CD8-positive, alpha-beta T cell (primary cell): ENCODE measurements at regions of chr15 and their contacts with region 1.

Region 1: GRCh38 chr15:81265944-81266775 is 57.8 kb downstream of the STARD5 start:
- DNase-seq: peak; percentile 64 to 88 (median 84)
- ATAC-seq: peak; percentile 84
- H3K4me3 ChIP-seq: peak overlapping the region; percentile 9 to 13
- H3K4me3 Mint-ChIP-seq: peak overlapping the region; percentile 78
- H3K27ac ChIP-seq: no peak overlapping the region
- H3K27ac Mint-ChIP-seq: peak overlapping the region; percentile 7
- H3K4me1 ChIP-seq: peaks cover 29% of the 10 kb centered on the region
- H3K4me1 Mint-ChIP-seq: peaks cover 47% of the 10 kb centered on the region
- H3K27me3 ChIP-seq: no peaks in the 10 kb centered on the region
- H3K27me3 Mint-ChIP-seq: no peaks in the 10 kb centered on the region
- CTCF ChIP-seq: peak; percentile 77

Region 2: GRCh38 chr15:80977627-80978036 is 288.5 kb before region 1 on chr15:
- CTCF ChIA-PET with region 1: interaction called, 26 read pairs
- POLR2A ChIA-PET with region 1: no interaction called
- intact Hi-C with region 1: loop called in 1 of 2 experiments (anchors 2 kb)
- DNase-seq: peak in 6 of 9 experiments; percentile 28 to 59 (median 40)
- ATAC-seq: peak; percentile 46
- H3K4me3 ChIP-seq: no peak overlapping the region
- H3K4me3 Mint-ChIP-seq: no peak overlapping the region
- H3K27ac ChIP-seq: no peak overlapping the region
- H3K27ac Mint-ChIP-seq: peak overlapping the region; percentile 14
- H3K4me1 ChIP-seq: no peaks in the 10 kb centered on the region
- H3K4me1 Mint-ChIP-seq: peaks cover 43% of the 10 kb centered on the region
- H3K27me3 ChIP-seq: no peaks in the 10 kb centered on the region
- H3K27me3 Mint-ChIP-seq: no peaks in the 10 kb centered on the region
- CTCF ChIP-seq: peak; percentile 17

Region 3: GRCh38 chr15:81106560-81106959 is 159.6 kb before region 1 on chr15:
- CTCF ChIA-PET with region 1: interaction called, 82 read pairs
- POLR2A ChIA-PET with region 1: no interaction called
- intact Hi-C with region 1: loop called (anchors 1 kb)
- DNase-seq: peak in 5 of 9 experiments; percentile 32 to 67 (median 45)
- ATAC-seq: no peak
- H3K4me3 ChIP-seq: no peak overlapping the region
- H3K4me3 Mint-ChIP-seq: no peak overlapping the region
- H3K27ac ChIP-seq: no peak overlapping the region
- H3K27ac Mint-ChIP-seq: no peak overlapping the region
- H3K4me1 ChIP-seq: no peaks in the 10 kb centered on the region
- H3K4me1 Mint-ChIP-seq: no peaks in the 10 kb centered on the region
- H3K27me3 ChIP-seq: no peaks in the 10 kb centered on the region
- H3K27me3 Mint-ChIP-seq: peaks cover 23% of the 10 kb centered on the region
- CTCF ChIP-seq: peak; percentile 69

Region 4: GRCh38 chr15:81163961-81164800 is 102.0 kb before region 1 on chr15:
- CTCF ChIA-PET with region 1: interaction called, 10 read pairs
- POLR2A ChIA-PET with region 1: no interaction called
- intact Hi-C with region 1: no loop called
- DNase-seq: no peak
- ATAC-seq: no peak
- H3K4me3 ChIP-seq: no peak overlapping the region
- H3K4me3 Mint-ChIP-seq: no peak overlapping the region
- H3K27ac ChIP-seq: no peak overlapping the region
- H3K27ac Mint-ChIP-seq: no peak overlapping the region
- H3K4me1 ChIP-seq: peaks cover 8% of the 10 kb centered on the region
- H3K4me1 Mint-ChIP-seq: peaks cover 15% of the 10 kb centered on the region
- H3K27me3 ChIP-seq: no peaks in the 10 kb centered on the region
- H3K27me3 Mint-ChIP-seq: peaks cover 9% of the 10 kb centered on the region
- CTCF ChIP-seq: no peak

Region 5: DNA sequence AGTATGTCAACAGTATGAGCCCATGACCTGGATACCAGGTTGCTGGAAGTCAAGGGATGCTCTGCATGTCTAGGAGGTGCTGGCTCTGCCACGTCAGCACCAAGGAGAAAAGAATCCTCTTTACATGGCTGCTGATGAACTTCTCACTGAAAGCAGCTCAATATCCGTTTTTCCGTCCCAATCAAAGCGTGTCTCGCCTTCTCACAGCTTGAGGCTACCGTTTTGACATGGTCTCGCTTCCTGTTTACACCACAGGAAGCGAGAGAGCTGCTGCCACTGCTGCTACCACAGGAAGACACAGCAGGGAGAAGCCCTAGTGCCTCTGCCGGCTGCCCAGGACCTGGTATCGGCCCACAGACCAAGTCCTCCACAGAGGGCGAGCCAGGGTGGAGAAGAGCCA is 30.5 kb after region 1 on chr15:
- CTCF ChIA-PET with region 1: interaction called, 498 read pairs
- POLR2A ChIA-PET with region 1: interaction called, 7 read pairs
- intact Hi-C with region 1: no loop called
- DNase-seq: peak; percentile 50 to 94 (median 79)
- ATAC-seq: peak; percentile 46
- H3K4me3 ChIP-seq: peak overlapping the region; percentile 88 to 89
- H3K4me3 Mint-ChIP-seq: peak overlapping the region; percentile 92
- H3K27ac ChIP-seq: peak overlapping the region; percentile 84 to 92
- H3K27ac Mint-ChIP-seq: peak overlapping the region; percentile 98
- H3K4me1 ChIP-seq: peaks cover 55% of the 10 kb centered on the region
- H3K4me1 Mint-ChIP-seq: peaks cover 72% of the 10 kb centered on the region
- H3K27me3 ChIP-seq: no peaks in the 10 kb centered on the region
- H3K27me3 Mint-ChIP-seq: no peaks in the 10 kb centered on the region
- CTCF ChIP-seq: no peak

Region 6: GRCh38 chr15:81342561-81342960 is 76.4 kb after region 1 on chr15:
- CTCF ChIA-PET with region 1: interaction called, 434 read pairs
- POLR2A ChIA-PET with region 1: no interaction called
- intact Hi-C with region 1: loop called in 1 of 2 experiments (anchors 2 kb)
- DNase-seq: no peak
- ATAC-seq: no peak
- H3K4me3 ChIP-seq: no peak overlapping the region
- H3K4me3 Mint-ChIP-seq: no peak overlapping the region
- H3K27ac ChIP-seq: no peak overlapping the region
- H3K27ac Mint-ChIP-seq: no peak overlapping the region
- H3K4me1 ChIP-seq: no peaks in the 10 kb centered on the region
- H3K4me1 Mint-ChIP-seq: no peaks in the 10 kb centered on the region
- H3K27me3 ChIP-seq: no peaks in the 10 kb centered on the region
- H3K27me3 Mint-ChIP-seq: no peaks in the 10 kb centered on the region
- CTCF ChIP-seq: no peak

Region 7: GRCh38 chr15:81410318-81410753 is 144.2 kb after region 1 on chr15:
- CTCF ChIA-PET with region 1: interaction called, 33 read pairs
- POLR2A ChIA-PET with region 1: interaction called, 3 read pairs
- intact Hi-C with region 1: no loop called
- DNase-seq: peak in 5 of 9 experiments; percentile 16 to 69 (median 52)
- ATAC-seq: peak; percentile 54
- H3K4me3 ChIP-seq: no peak overlapping the region
- H3K4me3 Mint-ChIP-seq: no peak overlapping the region
- H3K27ac ChIP-seq: no peak overlapping the region
- H3K27ac Mint-ChIP-seq: no peak overlapping the region
- H3K4me1 ChIP-seq: peaks cover 8% of the 10 kb centered on the region
- H3K4me1 Mint-ChIP-seq: peaks cover 12% of the 10 kb centered on the region
- H3K27me3 ChIP-seq: no peaks in the 10 kb centered on the region
- H3K27me3 Mint-ChIP-seq: peaks cover 11% of the 10 kb centered on the region
- CTCF ChIP-seq: peak; percentile 49